H1 (cell line): ENCODE measurements at regions of chr1 and their contacts with region 1.

Region 1: GRCh38 chr1:22709891-22710700 is 543 bp upstream of the EPHB2 start:
- DNase-seq: peak in 1 of 2 experiments; percentile 79
- H3K4me3 ChIP-seq: peak overlapping the region; percentile 19 to 64 (median 38)
- H3K27ac ChIP-seq: no peak overlapping the region
- H3K4me1 ChIP-seq: peaks cover 0 to 6% (median 2%) of the 10 kb centered on the region in 4 experiments; a peak in 4 of 7 replicates
- H3K27me3 ChIP-seq: peaks cover 7 to 24% (median 15%) of the 10 kb centered on the region in 4 experiments
- CTCF ChIP-seq: no peak
- EP300 ChIP-seq: peak in 1 of 2 experiments; percentile 47; a peak in 1 of 3 replicates
- POLR2A ChIP-seq: no peak
- RAD21 ChIP-seq: no peak

Region 2: DNA sequence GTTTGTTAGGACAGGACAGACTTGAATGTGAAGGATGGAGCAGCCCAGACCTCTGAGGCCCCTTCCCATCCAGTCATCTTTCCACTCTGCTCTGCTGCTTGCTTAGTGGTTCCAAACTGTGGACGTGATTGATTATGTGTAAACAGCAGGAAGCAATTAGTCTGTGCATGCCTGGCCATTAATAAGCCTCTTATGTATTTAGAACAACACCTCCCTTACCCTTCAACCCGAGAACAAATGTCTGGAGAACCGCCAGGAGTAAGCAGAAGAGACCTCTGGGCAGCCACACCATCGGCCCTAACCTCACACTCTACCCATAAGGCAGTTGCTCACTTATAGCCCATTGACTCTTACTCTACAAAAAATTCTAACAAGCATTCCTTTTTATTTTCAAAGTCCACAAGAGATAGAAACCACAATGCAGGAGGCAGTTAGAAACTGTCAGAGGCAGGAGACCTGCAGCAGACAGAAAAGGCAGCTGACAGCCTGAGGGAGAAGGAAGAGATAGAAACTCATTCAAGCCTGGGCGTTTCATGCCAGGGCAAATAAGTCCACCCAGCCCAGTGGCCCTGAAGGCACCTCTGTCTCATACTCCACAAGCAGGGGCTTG is 152.7 kb before region 1 on chr1:
- CTCF ChIA-PET with region 1: no interaction called
- POLR2A ChIA-PET with region 1: no interaction called
- DNase-seq: no peak
- H3K4me3 ChIP-seq: no peak overlapping the region
- H3K27ac ChIP-seq: no peak overlapping the region
- H3K4me1 ChIP-seq: peaks cover 0 to 36% (median 19%) of the 10 kb centered on the region in 4 experiments; a peak in 6 of 7 replicates
- H3K27me3 ChIP-seq: peaks cover 6 to 16% (median 7%) of the 10 kb centered on the region in 4 experiments
- CTCF ChIP-seq: no peak
- EP300 ChIP-seq: no peak
- POLR2A ChIP-seq: no peak
- RAD21 ChIP-seq: no peak

Region 3: GRCh38 chr1:22665752-22666151 is 44.3 kb before region 1 on chr1:
- CTCF ChIA-PET with region 1: interaction called, 13 read pairs
- POLR2A ChIA-PET with region 1: no interaction called
- DNase-seq: peak in 1 of 2 experiments; percentile 79
- H3K4me3 ChIP-seq: no peak overlapping the region
- H3K27ac ChIP-seq: no peak overlapping the region
- H3K4me1 ChIP-seq: peaks cover 0 to 1% (median 0%) of the 10 kb centered on the region in 4 experiments; a peak in 1 of 7 replicates
- H3K27me3 ChIP-seq: no peaks in the 10 kb centered on the region
- CTCF ChIP-seq: peak; percentile 81 to 91 (median 88)
- EP300 ChIP-seq: no peak
- POLR2A ChIP-seq: no peak
- RAD21 ChIP-seq: peak; percentile 94 to 95

Region 4: GRCh38 chr1:22673486-22674409 is 36.3 kb before region 1 on chr1:
- CTCF ChIA-PET with region 1: interaction called, 43 read pairs
- POLR2A ChIA-PET with region 1: interaction called, 3 read pairs
- DNase-seq: peak in 1 of 2 experiments; percentile 84
- H3K4me3 ChIP-seq: peak overlapping the region in 1 of 4 experiments; percentile 10; a peak in 1 of 8 replicates
- H3K27ac ChIP-seq: no peak overlapping the region
- H3K4me1 ChIP-seq: peaks cover 0 to 10% (median 5%) of the 10 kb centered on the region in 4 experiments; a peak in 4 of 7 replicates
- H3K27me3 ChIP-seq: no peaks in the 10 kb centered on the region; a peak in 1 of 7 replicates
- CTCF ChIP-seq: peak; percentile 59 to 76 (median 73)
- EP300 ChIP-seq: no peak
- POLR2A ChIP-seq: no peak
- RAD21 ChIP-seq: peak; percentile 81

Region 5: DNA sequence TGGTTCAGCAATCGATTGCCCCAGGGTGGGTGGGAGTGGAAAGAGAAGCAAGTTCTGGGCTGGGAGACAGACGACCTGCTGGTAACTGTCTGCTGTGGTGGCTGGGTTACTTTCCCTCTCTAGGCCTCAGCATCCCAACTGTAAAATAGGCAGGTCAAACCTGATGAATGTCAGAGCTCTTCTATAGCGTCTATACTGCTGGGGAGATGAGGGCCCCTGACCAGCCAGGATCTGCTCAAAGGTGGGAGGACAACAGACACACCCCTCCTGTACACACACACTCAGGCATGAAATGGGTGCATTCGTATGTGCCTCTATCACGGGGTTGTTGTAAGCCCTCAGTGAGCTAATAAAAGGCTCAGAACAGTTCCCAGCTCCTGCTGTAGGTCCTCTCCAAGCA is 12.1 kb before region 1 on chr1:
- CTCF ChIA-PET with region 1: interaction called, 33 read pairs
- POLR2A ChIA-PET with region 1: no interaction called
- DNase-seq: no peak
- H3K4me3 ChIP-seq: no peak overlapping the region
- H3K27ac ChIP-seq: no peak overlapping the region
- H3K4me1 ChIP-seq: peaks cover 0 to 4% (median 0%) of the 10 kb centered on the region in 4 experiments; a peak in 1 of 7 replicates
- H3K27me3 ChIP-seq: no peaks in the 10 kb centered on the region
- CTCF ChIP-seq: no peak
- EP300 ChIP-seq: no peak
- POLR2A ChIP-seq: no peak
- RAD21 ChIP-seq: no peak

Region 6: GRCh38 chr1:22722901-22723550 is 12.9 kb after region 1 on chr1:
- CTCF ChIA-PET with region 1: interaction called, 86 read pairs
- POLR2A ChIA-PET with region 1: interaction called, 3 read pairs
- DNase-seq: no peak
- H3K4me3 ChIP-seq: no peak overlapping the region
- H3K27ac ChIP-seq: no peak overlapping the region
- H3K4me1 ChIP-seq: no peaks in the 10 kb centered on the region
- H3K27me3 ChIP-seq: no peaks in the 10 kb centered on the region
- CTCF ChIP-seq: no peak
- EP300 ChIP-seq: no peak
- POLR2A ChIP-seq: no peak
- RAD21 ChIP-seq: no peak

Region 7: GRCh38 chr1:22731924-22732720 is 22.0 kb after region 1 on chr1:
- CTCF ChIA-PET with region 1: interaction called, 34 read pairs
- POLR2A ChIA-PET with region 1: no interaction called
- DNase-seq: no peak
- H3K4me3 ChIP-seq: no peak overlapping the region
- H3K27ac ChIP-seq: no peak overlapping the region
- H3K4me1 ChIP-seq: peaks cover 0 to 12% (median 5%) of the 10 kb centered on the region in 4 experiments; a peak in 5 of 7 replicates
- H3K27me3 ChIP-seq: no peaks in the 10 kb centered on the region
- CTCF ChIP-seq: peak; percentile 66 to 82 (median 68)
- EP300 ChIP-seq: no peak
- POLR2A ChIP-seq: no peak
- RAD21 ChIP-seq: peak; percentile 62 to 78

Region 8: DNA sequence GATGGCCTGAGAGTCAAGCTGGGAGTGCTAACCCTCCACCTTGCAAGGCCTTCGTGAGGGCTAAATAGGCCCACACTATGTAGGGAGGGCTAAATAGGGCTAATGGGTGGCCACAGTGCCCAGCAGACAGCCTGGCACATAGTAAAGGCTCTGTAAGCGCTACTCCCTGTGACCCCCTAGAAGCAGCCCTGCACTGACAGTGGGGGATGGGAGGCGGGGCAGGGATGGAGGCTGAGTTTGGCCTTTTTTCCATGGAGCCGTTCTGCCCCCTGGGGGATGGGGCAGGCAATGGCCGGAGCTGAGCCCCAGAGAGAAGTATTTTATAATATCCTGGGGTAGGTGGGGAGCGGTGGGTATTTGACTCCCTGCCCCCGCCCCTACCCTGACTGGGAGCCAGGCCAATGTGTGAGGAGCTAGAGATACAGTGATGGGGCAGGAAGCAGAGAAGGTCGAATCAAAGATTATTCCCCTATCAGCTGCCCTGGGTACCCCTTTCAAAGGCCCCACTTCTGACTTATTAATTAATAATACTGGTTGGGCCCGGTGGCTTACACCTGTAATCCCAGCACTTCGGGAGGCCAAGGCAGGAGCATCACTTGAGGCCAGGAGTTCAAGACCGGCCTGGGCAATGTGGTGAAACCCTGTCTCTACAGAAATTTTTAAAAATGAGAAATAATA is 220.3 kb after region 1 on chr1:
- CTCF ChIA-PET with region 1: interaction called, 27 read pairs
- POLR2A ChIA-PET with region 1: no interaction called
- DNase-seq: peak; percentile 44 to 95
- H3K4me3 ChIP-seq: no peak overlapping the region
- H3K27ac ChIP-seq: no peak overlapping the region
- H3K4me1 ChIP-seq: no peaks in the 10 kb centered on the region
- H3K27me3 ChIP-seq: no peaks in the 10 kb centered on the region; a peak in 1 of 7 replicates
- CTCF ChIP-seq: peak; percentile 81 to 93 (median 85)
- EP300 ChIP-seq: 0 out of 3 replicates have a peak, but pooled peaks of 1 of the 2 experiments have one; percentile 46
- POLR2A ChIP-seq: no peak
- RAD21 ChIP-seq: peak; percentile 94 to 98